OCI-LY7 (cell line): ENCODE measurements at regions of chr6 and their contacts with region 1.

Region 1: DNA sequence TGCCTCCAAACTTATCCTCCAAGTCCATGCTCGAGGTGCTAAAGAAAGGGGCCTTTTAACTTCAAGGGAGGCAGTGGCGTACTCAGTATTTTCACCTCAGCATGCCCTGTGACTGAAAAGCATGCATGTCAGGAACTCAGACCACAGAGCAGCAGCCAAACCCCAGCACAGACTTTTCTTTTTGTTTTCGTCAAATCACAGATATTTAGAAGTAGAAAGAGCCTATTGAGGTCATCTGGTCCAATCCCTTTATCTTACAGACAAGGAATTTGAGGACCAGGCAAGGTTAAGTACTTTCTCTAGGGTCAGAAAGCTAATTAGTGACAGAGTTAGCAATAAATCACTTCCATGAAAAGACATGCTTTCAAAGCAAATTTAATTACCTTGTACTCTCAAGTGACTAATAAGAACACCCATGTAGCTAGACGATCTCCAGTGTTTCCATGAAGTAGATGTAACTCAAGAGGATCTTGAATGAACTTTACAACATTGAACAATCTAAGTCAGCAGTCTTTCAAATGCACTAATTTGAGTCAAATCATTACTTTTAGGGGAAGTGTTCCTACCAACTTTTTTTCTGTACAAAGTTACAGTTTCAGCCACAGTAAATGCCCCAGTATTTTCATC is 35.9 kb downstream of the MOXD1 start:
- DNase-seq: no peak
- H3K4me3 ChIP-seq: no peak overlapping the region
- H3K27ac ChIP-seq: no peak overlapping the region
- H3K4me1 ChIP-seq: peaks cover 22% of the 10 kb centered on the region
- CTCF ChIP-seq: no peak

Region 2: GRCh38 chr6:132286026-132287019 is 79.1 kb before region 1 on chr6:
- CTCF ChIA-PET with region 1: no interaction called
- POLR2A ChIA-PET with region 1: no interaction called
- intact Hi-C with region 1: no loop called
- DNase-seq: peak; percentile 24
- H3K4me3 ChIP-seq: no peak overlapping the region
- H3K27ac ChIP-seq: no peak overlapping the region
- H3K4me1 ChIP-seq: peaks cover 15% of the 10 kb centered on the region
- CTCF ChIP-seq: 0 out of 2 replicates have a peak, but pooled peaks have one; percentile 19

Region 3: GRCh38 chr6:132354512-132355167 is 10.8 kb before region 1 on chr6:
- CTCF ChIA-PET with region 1: no interaction called
- POLR2A ChIA-PET with region 1: interaction called, 11 read pairs
- intact Hi-C with region 1: no loop called
- DNase-seq: peak; percentile 93
- H3K4me3 ChIP-seq: peak overlapping the region; percentile 25
- H3K27ac ChIP-seq: peak overlapping the region; percentile 55
- H3K4me1 ChIP-seq: peaks cover 53% of the 10 kb centered on the region
- CTCF ChIP-seq: peak; percentile 50

Region 4: DNA sequence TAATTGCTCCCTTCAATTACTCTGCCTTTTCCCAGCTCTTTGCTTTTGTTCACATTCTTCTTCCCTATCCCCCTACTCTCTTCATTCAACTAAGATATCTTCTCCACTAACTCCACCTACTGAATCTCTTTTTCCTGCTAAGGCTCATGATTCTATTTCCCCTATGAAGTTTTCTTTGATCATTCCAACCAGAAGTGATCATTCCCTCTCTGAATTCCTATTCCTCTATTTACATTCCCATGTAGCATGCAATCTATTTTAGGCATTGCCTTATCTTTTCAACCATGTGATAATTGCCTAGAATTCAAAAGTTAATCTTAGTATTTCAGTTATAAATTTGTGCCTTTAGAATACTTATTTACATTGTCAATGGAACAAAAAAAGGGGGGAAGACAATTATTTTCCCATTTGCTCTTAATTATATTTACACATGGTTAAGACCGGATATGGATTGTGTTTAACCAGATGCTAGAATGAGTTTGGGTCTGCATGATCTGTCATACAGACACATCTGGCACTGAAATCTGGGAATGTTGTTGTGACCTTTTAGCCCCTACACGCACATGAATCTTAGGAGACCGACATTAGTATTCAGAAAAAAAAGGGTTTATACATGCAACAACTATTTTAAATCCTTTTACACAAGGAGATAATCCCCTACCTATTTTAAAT is 15.1 kb after region 1 on chr6:
- CTCF ChIA-PET with region 1: no interaction called
- POLR2A ChIA-PET with region 1: interaction called, 10 read pairs
- intact Hi-C with region 1: no loop called
- DNase-seq: no peak
- H3K4me3 ChIP-seq: no peak overlapping the region
- H3K27ac ChIP-seq: no peak overlapping the region
- H3K4me1 ChIP-seq: peaks cover 19% of the 10 kb centered on the region
- CTCF ChIP-seq: no peak